Aorta (tissue), 5 donors: ENCODE measurements at regions of chr11 and their contacts with region 1.

Region 1: GRCh38 chr11:96267496-96268032 is 75.4 kb downstream of the MAML2 start:
- DNase-seq: no peak
- ATAC-seq: no peak
- H3K4me3 ChIP-seq: no peak overlapping the region
- H3K27ac ChIP-seq: no peak overlapping the region
- H3K4me1 ChIP-seq: peaks cover 4 to 10% of the 10 kb centered on the region in 2 donors
- H3K27me3 ChIP-seq: no peaks in the 10 kb centered on the region

Region 2: GRCh38 chr11:96188243-96189006 is 79.1 kb before region 1 on chr11:
- intact Hi-C with region 1: no loop called
- DNase-seq: no peak
- ATAC-seq: peak; percentile 29
- H3K4me3 ChIP-seq: no peak overlapping the region
- H3K27ac ChIP-seq: peak overlapping the region; percentile 3 to 25
- H3K4me1 ChIP-seq: peaks cover 0 to 4% of the 10 kb centered on the region in 2 donors
- H3K27me3 ChIP-seq: no peaks in the 10 kb centered on the region

Region 3: GRCh38 chr11:96306933-96307775 is 39.6 kb after region 1 on chr11:
- intact Hi-C with region 1: loop called in 1 of 2 experiments (anchors 5 kb)
- DNase-seq: peak; percentile 80 to 88
- ATAC-seq: peak; percentile 93
- H3K4me3 ChIP-seq: peak overlapping the region; percentile 44 to 47
- H3K27ac ChIP-seq: peak overlapping the region; percentile 87
- H3K4me1 ChIP-seq: peaks cover 8 to 20% of the 10 kb centered on the region in 2 donors
- H3K27me3 ChIP-seq: no peaks in the 10 kb centered on the region